Naive thymus-derived CD4-positive, alpha-beta T cell (primary cell): ENCODE measurements at regions of chr16 and their contacts with region 1.

Region 1: DNA sequence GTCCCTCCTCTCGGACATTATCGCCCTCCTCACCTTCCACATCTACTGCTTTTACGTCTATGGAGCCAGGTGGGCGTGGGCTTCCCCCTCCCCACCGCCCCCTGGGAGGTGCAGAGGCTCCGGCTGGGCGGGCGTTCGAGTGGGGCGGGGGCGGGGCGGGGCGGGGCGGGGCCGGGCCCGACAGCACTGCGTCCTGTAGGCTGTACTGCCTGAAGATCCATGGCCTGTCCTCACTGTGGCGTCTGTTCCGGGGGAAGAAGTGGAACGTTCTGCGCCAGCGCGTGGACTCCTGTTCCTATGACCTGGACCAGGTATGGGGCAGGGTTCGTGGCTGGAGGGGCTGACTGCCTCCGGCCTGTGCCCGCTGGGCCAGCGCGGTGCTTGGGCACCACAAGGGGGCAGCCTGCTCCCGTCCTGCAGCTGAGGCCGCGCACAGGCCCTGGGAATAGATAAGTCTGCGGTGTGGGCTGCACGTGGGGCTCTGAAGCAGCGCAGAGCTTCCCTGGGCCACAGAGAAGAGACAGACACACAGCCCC is 9.2 kb downstream of the PIGQ start:
- DNase-seq: peak; percentile 47 to 77 (median 58)
- ATAC-seq: peak; percentile 94
- H3K4me3 ChIP-seq: no peak overlapping the region
- H3K4me3 Mint-ChIP-seq: no peak overlapping the region
- H3K27ac ChIP-seq: no peak overlapping the region
- H3K27ac Mint-ChIP-seq: no peak overlapping the region
- H3K4me1 ChIP-seq: no peaks in the 10 kb centered on the region
- H3K4me1 Mint-ChIP-seq: peaks cover 0 to 6% (median 0%) of the 10 kb centered on the region in 7 donors
- H3K27me3 ChIP-seq: no peaks in the 10 kb centered on the region
- H3K27me3 Mint-ChIP-seq: no peaks in the 10 kb centered on the region

Region 2: DNA sequence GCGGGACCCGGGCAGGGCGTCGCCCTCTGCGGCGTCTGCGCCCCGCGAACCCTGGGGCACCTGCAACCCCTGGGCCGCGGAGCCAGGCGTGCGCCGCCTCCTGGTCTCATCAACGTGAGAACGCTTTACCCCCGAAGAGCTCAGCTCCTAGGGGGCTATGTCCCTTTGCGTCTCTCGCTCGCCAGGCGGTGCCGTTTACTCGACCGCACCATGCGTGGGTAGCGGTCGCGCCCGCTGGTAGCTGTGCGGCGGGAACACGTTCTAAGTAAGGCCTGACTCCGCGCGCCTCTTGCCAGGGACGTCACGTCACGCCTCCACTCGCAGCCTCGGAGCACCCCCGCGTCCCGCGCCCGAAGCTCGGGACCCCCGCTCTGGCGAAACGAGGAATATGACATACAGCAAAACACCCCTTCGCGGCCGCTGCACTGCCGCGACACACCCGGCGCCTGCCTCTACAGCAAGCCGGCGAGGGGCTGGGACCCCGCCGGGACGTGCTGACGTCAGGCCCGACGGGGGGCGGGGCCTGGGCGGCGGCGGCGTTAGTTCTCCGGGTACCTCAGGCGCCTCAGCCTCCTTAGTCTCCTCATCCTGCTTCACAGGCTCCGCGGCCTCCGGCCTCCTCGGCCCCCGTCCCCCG is 153.7 kb before region 1 on chr16 and contains the start of gene RAB11FIP3:
- CTCF ChIA-PET with region 1: no interaction called
- POLR2A ChIA-PET with region 1: no interaction called
- intact Hi-C with region 1: no loop called
- DNase-seq: peak; percentile 80 to 91 (median 87)
- ATAC-seq: peak; percentile 94
- H3K4me3 ChIP-seq: peak within 1 kb of the TSS; percentile 83
- H3K4me3 Mint-ChIP-seq: peak within 1 kb of the TSS; percentile 78 to 92 (median 88)
- H3K27ac ChIP-seq: peak within 1 kb of the TSS; percentile 92
- H3K27ac Mint-ChIP-seq: peak within 1 kb of the TSS in 8 of 9 donors; percentile 78 to 95 (median 90)
- H3K4me1 ChIP-seq: peaks cover 10 to 17% of the 10 kb centered on the region in 2 donors
- H3K4me1 Mint-ChIP-seq: peaks cover 22 to 39% (median 32%) of the 10 kb centered on the region in 7 donors
- H3K27me3 ChIP-seq: no peaks in the 10 kb centered on the region
- H3K27me3 Mint-ChIP-seq: peaks cover 0 to 18% (median 0%) of the 10 kb centered on the region in 5 donors
- total RNA-seq, gene RAB11FIP3: 37.9 to 53.0 (median 45.5) TPM

Region 3: DNA sequence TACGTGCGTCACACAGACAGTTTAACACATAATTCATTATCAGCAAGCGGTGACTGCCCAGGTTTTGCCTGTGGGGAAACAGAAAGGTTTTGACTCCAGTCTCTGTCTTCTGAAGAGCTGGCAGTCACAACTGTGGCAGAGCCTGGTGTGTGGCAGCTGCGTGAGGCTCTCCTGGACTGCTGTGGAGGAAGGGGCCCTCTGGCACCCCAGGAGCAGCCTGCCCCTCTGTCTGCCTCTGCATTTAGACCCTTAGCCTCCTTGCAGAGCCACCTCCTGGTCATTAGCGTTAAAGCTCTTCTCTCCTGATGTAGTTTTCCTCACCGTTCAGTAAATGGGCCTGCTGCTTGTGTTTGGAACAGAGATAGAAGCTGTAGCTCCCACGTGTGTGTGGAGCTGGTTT is 21.8 kb after region 1 on chr16:
- CTCF ChIA-PET with region 1: interaction called, 10 read pairs
- POLR2A ChIA-PET with region 1: no interaction called
- intact Hi-C with region 1: no loop called
- DNase-seq: no peak
- ATAC-seq: no peak
- H3K4me3 ChIP-seq: no peak overlapping the region
- H3K4me3 Mint-ChIP-seq: no peak overlapping the region
- H3K27ac ChIP-seq: no peak overlapping the region
- H3K27ac Mint-ChIP-seq: no peak overlapping the region
- H3K4me1 ChIP-seq: no peaks in the 10 kb centered on the region
- H3K4me1 Mint-ChIP-seq: peaks cover 3 to 24% (median 18%) of the 10 kb centered on the region in 7 donors
- H3K27me3 ChIP-seq: no peaks in the 10 kb centered on the region
- H3K27me3 Mint-ChIP-seq: no peaks in the 10 kb centered on the region

Region 4: GRCh38 chr16:660459-661183 is 81.7 kb after region 1 on chr16:
- CTCF ChIA-PET with region 1: no interaction called
- POLR2A ChIA-PET with region 1: no interaction called
- intact Hi-C with region 1: loop called in 1 of 2 experiments (anchors 1 kb)
- DNase-seq: peak in 8 of 9 donors; percentile 44 to 74 (median 59)
- ATAC-seq: peak; percentile 90
- H3K4me3 ChIP-seq: no peak overlapping the region
- H3K4me3 Mint-ChIP-seq: peak overlapping the region in 3 of 10 donors; percentile 33 to 37 (median 35)
- H3K27ac ChIP-seq: peak overlapping the region; percentile 3
- H3K27ac Mint-ChIP-seq: peak overlapping the region in 2 of 9 donors; percentile 45 to 46
- H3K4me1 ChIP-seq: peaks cover 0 to 7% of the 10 kb centered on the region in 2 donors
- H3K4me1 Mint-ChIP-seq: peaks cover 0 to 9% (median 4%) of the 10 kb centered on the region in 7 donors
- H3K27me3 ChIP-seq: no peaks in the 10 kb centered on the region
- H3K27me3 Mint-ChIP-seq: no peaks in the 10 kb centered on the region